ENCODE measurements at regions of chr4 and their contacts with region 1.

Region 1: GRCh38 chr4:88291003-88291402 is 6.6 kb upstream of the PPM1K start:
- DNase-seq: no peak
- ATAC-seq: peak; percentile 86
- H3K4me3 ChIP-seq: no peak overlapping the region
- H3K27ac ChIP-seq: no peak overlapping the region
- H3K4me1 ChIP-seq: peaks cover 2% of the 10 kb centered on the region
- H3K27me3 ChIP-seq: no peaks in the 10 kb centered on the region

Region 2: DNA sequence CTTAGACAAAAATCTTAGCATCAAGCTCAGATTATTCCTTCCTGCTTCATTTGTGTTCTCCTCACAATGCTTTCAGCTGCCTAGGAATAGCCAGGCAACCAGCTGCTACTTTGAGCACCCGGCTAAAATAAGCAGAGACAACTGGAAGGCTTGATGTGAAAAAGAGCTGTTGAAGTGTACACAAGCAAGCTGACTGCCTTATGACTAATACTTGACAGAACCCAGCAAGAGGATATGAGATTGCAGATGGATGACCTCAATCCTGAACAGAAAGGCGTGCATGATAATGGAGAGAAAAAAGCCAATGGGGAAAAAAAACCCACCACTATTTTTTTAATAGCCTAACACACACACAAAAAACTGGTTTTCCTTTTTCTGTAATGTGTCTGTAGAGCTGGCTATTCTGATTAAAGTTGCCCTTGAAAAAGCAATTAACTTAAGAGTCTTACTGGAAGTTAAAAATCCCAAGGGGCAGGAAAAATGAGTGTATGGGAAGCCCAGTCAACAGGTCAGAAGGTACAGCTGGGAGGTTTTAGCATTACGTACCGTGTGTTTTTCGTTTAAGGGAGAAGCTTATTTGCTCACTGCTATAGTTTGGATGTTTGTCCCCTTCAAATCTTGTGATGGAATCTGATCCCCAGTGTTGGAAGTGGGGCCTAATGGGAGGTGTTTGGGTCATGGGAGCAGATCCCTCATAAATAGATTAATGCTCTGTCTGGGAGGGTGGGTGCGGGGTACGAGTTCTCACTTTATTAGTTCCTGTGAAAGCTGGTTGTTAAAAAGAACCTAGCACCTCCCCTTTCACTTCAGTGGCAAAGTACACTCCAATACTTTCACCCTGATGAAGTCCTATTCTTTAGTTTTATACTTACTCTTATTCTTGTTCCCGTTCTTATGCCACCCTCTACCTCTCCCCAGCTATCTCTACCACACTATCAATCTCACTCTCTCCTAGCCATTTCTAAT is 50.5 kb after region 1 on chr4:
- intact Hi-C with region 1: loop called in 1 of 4 experiments (anchors 10 kb)
- DNase-seq: peak in 1 of 3 donors; percentile 45
- ATAC-seq: peak; percentile 98
- H3K4me3 ChIP-seq: no peak overlapping the region
- H3K27ac ChIP-seq: peak overlapping the region; percentile 92
- H3K4me1 ChIP-seq: no peaks in the 10 kb centered on the region
- H3K27me3 ChIP-seq: no peaks in the 10 kb centered on the region

Region 3: GRCh38 chr4:88398381-88398780 is 107.4 kb after region 1 on chr4:
- intact Hi-C with region 1: no loop called
- DNase-seq: no peak
- ATAC-seq: no peak
- H3K4me3 ChIP-seq: no peak overlapping the region
- H3K27ac ChIP-seq: no peak overlapping the region
- H3K4me1 ChIP-seq: no peaks in the 10 kb centered on the region
- H3K27me3 ChIP-seq: no peaks in the 10 kb centered on the region